Mammary epithelial cell (primary cell): ENCODE measurements at regions of chr14 and their contacts with region 1.

Region 1: DNA sequence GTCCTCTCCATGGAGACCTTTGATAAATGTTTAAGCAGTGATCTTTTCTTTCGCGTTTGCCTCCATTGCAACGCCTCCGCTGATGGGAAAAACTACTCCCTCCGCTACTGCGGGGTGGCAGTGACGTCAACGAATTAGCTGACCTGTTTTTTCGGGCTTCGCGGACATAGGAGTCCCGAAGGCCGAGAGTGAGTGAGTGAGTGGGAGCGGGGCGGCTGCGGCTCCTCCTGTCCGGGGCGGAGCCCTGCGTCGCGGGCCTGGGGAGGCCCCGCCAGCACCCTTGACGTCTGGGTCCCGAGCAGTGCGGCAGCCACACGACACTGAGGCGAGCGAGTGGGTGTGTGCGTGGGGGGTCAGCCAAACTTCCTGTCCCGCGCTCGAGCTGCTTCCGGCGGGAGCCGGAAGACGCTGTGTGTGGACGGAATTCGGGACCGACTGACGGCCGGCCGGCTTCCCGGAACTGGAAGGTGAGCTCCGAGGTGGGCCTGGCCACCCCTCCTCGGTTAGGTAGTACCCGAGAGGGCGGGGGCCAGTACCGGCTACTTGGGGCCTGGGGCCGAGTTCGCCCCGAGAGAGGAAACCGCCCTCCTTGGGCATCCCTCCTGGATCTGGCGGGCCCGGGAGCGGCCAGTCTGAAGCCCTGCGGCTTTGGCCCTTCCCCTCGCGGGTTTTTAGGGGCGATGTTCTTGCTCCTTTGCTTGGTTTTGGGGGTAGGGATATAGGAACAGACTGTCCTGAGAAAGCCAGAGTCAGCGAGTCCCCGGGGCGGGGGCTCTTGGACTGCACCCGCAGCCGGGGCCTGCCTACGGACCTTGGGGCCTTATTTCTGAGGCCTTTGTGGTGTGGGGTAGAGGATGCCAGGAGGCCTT is at the start of gene ZNF410:
- DNase-seq: peak; percentile 98
- H3K4me3 ChIP-seq: peak within 1 kb of the TSS; percentile 83 to 94 (median 89)
- H3K27ac ChIP-seq: peak within 1 kb of the TSS; percentile 79
- H3K4me1 ChIP-seq: peaks cover 17% of the 10 kb centered on the region
- H3K27me3 ChIP-seq: no peaks in the 10 kb centered on the region
- CTCF ChIP-seq: no peak
- total RNA-seq, gene ZNF410: 58.3 to 93.9 TPM

Region 2: GRCh38 chr14:73728717-73729330 is 157.9 kb before region 1 on chr14:
- CTCF ChIA-PET with region 1: no interaction called
- dilution Hi-C with region 1: no loop called
- in situ Hi-C with region 1: no loop called
- intact Hi-C with region 1: loop called (anchors 5 kb)
- DNase-seq: peak; percentile 50
- H3K4me3 ChIP-seq: no peak overlapping the region
- H3K27ac ChIP-seq: no peak overlapping the region
- H3K4me1 ChIP-seq: peaks cover 42% of the 10 kb centered on the region
- H3K27me3 ChIP-seq: no peaks in the 10 kb centered on the region
- CTCF ChIP-seq: peak; percentile 92 to 95

Region 3: DNA sequence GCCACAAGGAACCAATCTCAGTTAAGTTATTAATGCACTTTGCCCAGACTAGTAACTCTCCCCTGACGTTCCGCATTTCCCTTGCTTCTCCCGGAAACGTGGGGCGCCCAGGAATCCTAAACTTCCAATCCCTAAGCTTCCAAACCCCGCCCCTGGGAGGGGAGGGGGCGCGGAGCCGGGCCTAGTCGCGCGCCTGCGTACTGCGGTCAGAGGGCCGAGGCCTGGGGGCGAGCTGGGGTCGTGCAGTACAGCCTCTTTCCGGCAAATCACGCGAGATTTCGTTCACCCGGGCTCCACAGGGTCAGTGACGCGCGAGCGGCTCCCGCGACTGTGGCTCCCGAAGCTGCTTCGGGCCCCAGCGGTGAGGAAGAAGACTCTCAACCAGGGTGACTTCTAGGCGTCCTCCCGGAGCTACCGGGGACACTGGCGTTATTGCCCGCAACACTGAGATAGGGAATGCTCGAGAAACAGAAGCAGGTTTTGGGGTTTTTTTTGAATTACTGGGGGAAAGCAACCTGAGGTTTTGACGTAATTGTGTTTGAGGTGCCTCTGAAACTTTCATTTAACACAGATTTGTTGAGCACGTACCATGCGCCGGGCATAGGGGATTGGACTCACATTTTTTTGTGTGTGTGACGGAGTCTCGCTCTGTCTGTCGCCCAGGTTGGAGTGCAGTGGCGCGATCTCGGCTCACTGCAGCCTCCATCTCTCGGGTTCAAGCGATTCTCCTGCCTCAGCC is 34.9 kb before region 1 on chr14 and contains the start of gene PTGR2:
- CTCF ChIA-PET with region 1: no interaction called
- dilution Hi-C with region 1: loop called (anchors 5 kb)
- in situ Hi-C with region 1: no loop called
- intact Hi-C with region 1: loop called (anchors 1 kb)
- DNase-seq: peak; percentile 92
- H3K4me3 ChIP-seq: peak within 1 kb of the TSS; percentile 49 to 95 (median 68)
- H3K27ac ChIP-seq: peak within 1 kb of the TSS; percentile 92
- H3K4me1 ChIP-seq: peaks cover 20% of the 10 kb centered on the region
- H3K27me3 ChIP-seq: no peaks in the 10 kb centered on the region
- CTCF ChIP-seq: peak in 1 of 2 donors; percentile 16
- total RNA-seq, gene PTGR2: 8.2 to 9.5 TPM

Region 4: GRCh38 chr14:73949744-73950734 is 63.4 kb after region 1 on chr14 and contains the starts of genes COQ6 and FAM161B:
- CTCF ChIA-PET with region 1: no interaction called
- dilution Hi-C with region 1: no loop called
- in situ Hi-C with region 1: no loop called
- intact Hi-C with region 1: loop called (anchors 2 kb)
- DNase-seq: peak; percentile 98
- H3K4me3 ChIP-seq: peak within 1 kb of the TSS; percentile 68 to 91 (median 85)
- H3K27ac ChIP-seq: peak within 1 kb of the TSS; percentile 92
- H3K4me1 ChIP-seq: no peaks in the 10 kb centered on the region
- H3K27me3 ChIP-seq: no peaks in the 10 kb centered on the region
- CTCF ChIP-seq: peak in 1 of 2 donors; percentile 36
- total RNA-seq, gene COQ6: 20.0 to 22.6 TPM
- total RNA-seq, gene FAM161B: 3.5 to 4.0 TPM

Region 5: DNA sequence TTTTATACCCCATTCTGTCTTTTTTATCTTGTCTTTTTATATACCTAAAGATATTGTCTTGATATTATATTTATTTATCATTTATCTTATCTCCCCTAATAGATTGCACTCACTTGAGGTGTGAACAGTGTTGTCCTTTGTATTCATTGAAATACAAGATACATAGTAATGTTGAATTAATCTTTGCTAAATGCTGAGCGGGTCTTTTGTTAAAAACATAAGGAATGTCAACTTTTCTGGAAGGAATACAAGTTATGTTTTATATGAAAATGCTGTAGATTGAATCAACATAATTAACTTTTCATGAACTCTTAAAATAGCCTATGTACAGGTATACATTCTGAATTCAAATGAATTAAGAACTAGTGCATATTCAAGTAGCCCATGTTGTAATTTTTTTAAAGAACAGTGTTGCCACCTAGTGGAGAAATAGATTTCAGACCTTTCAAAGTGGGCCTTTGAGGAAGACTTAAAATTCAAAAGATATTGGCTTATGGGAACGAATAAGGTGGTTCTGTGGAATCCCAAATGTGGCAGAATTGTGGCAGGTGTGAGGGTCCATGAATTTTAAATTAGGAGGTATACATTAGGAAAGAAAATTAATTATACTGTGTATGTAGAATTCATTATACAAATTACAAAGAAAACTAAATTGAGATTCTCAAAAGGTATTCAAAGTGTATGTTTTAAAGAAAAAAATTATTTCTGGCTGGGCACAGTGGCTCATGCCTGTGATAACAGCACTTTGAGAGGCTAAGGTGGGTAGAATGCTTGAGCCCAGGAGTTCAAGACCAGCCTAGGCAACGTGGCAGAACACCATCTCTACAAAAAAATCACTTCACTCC is 151.6 kb after region 1 on chr14:
- CTCF ChIA-PET with region 1: no interaction called
- dilution Hi-C with region 1: no loop called
- in situ Hi-C with region 1: no loop called
- intact Hi-C with region 1: loop called (anchors 10 kb)
- DNase-seq: peak; percentile 47
- H3K4me3 ChIP-seq: no peak overlapping the region
- H3K27ac ChIP-seq: no peak overlapping the region
- H3K4me1 ChIP-seq: no peaks in the 10 kb centered on the region
- H3K27me3 ChIP-seq: no peaks in the 10 kb centered on the region
- CTCF ChIP-seq: peak; percentile 64 to 65